Panc1 (cell line): ENCODE measurements at regions of chr1 and their contacts with region 1.

Region 1: DNA sequence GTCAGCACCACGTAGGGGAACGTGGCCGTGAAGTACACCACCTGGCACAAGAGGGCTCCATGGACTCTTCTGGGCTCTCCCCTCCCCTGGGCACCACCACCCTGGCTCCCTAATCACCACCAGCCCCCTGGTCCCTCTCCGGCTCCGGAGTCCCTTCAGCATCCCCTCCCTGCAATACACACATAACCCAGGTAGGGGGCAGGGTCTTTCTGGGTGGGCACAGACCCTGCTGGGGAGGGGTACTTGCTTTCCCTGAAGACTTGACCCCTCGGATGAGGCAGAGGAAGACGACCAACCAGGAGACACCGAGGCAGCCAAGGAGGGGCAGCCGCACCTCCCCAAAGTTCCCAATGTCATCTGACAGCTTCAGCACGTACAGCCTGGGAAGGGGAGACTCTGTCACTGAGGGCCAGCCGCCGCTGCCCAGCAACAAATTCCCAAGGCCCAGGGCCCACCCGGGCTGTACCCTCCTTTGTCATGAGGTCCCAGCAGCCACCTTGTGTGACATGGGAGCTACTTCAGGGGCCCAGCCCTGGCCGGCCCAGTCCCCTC is 11.3 kb downstream of the CCDC24 start:
- DNase-seq: no peak
- ATAC-seq: no peak
- H3K4me3 ChIP-seq: no peak overlapping the region
- H3K27ac ChIP-seq: no peak overlapping the region
- H3K4me1 ChIP-seq: peaks cover 2% of the 10 kb centered on the region; the same call in 1 of the 2 replicates
- H3K27me3 ChIP-seq: no peaks in the 10 kb centered on the region
- CTCF ChIP-seq: no peak; the same call in 1 of the 2 replicates

Region 2: DNA sequence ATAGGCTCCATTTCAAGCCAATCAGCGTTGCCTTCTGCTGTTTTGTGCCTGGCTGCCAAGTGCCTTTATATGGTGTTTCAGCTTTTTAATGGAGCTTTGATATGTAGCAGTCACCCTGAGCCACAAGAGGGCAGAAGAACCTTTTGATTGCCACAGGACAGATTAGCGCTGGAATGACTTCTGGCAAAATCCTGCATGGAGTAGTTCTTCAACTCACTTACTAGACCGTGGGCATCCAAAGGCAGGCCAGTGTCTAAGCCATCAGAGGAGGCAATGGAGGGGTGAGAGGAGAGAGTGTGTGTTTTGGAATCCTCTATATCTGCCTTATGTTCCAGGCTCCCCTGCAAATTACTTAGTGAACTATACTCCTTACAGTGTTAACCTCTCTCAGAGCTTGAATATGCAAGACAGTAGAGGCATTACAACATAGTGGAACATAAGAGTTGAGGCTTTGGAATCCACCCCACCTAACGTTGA is 239.1 kb before region 1 on chr1:
- CTCF ChIA-PET with region 1: no interaction called
- POLR2A ChIA-PET with region 1: no interaction called
- in situ Hi-C with region 1: no loop called
- intact Hi-C with region 1: no loop called
- DNase-seq: peak; percentile 82
- ATAC-seq: peak; percentile 98
- H3K4me3 ChIP-seq: no peak overlapping the region
- H3K27ac ChIP-seq: no peak overlapping the region; the same call in 1 of the 2 replicates
- H3K4me1 ChIP-seq: peaks cover 16% of the 10 kb centered on the region; the same call in 1 of the 2 replicates
- H3K27me3 ChIP-seq: no peaks in the 10 kb centered on the region
- CTCF ChIP-seq: peak; percentile 89

Region 3: GRCh38 chr1:43952731-43953346 is 49.8 kb before region 1 on chr1:
- CTCF ChIA-PET with region 1: no interaction called
- POLR2A ChIA-PET with region 1: no interaction called
- in situ Hi-C with region 1: no loop called
- intact Hi-C with region 1: no loop called
- DNase-seq: no peak
- ATAC-seq: no peak
- H3K4me3 ChIP-seq: no peak overlapping the region
- H3K27ac ChIP-seq: no peak overlapping the region
- H3K4me1 ChIP-seq: peaks cover 8% of the 10 kb centered on the region
- H3K27me3 ChIP-seq: no peaks in the 10 kb centered on the region
- CTCF ChIP-seq: no peak

Region 4: DNA sequence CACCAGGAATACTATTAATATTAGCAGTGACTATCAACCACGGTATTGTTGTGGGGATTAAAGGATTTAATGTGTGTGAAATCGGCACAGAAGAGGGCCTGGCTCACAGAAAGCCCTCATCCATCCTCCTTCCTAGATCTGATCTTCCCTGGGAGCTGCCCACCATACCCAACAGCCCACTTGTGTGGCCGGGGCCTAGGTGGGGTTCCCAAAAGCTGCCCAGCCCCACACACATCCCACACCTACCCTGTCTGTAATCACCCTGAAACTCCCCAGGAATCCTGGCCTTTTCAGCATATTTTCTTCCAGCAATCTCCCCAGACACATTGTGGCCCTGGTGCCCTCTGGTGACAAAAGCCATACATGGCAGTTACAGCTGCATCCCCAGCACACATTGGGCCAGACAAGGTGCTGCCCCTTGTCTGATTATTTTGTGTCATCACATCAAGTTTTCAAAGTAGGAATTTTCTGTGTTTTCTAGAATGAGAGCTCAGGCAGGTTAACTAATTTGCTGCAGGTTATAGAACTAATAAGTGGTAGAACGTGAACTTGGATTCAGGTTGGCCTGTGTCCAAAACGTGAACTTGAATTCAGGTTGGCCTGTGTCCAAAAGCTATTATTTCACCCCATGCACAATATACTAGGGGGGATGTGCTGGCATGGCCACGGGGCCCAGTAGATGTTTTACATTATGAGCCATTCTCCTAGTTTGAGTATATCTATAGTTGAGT is 33.9 kb after region 1 on chr1:
- CTCF ChIA-PET with region 1: interaction called, 16 read pairs
- POLR2A ChIA-PET with region 1: no interaction called
- in situ Hi-C with region 1: no loop called
- intact Hi-C with region 1: loop called (anchors 1 kb)
- DNase-seq: no peak
- ATAC-seq: peak; percentile 87
- H3K4me3 ChIP-seq: no peak overlapping the region
- H3K27ac ChIP-seq: no peak overlapping the region
- H3K4me1 ChIP-seq: peaks cover 3% of the 10 kb centered on the region; the same call in 1 of the 2 replicates
- H3K27me3 ChIP-seq: no peaks in the 10 kb centered on the region
- CTCF ChIP-seq: peak; percentile 92